Activated CD4-positive, alpha-beta T cell treated with anti-CD3 and anti-CD28 coated beads for 36 hours (primary cell): ENCODE measurements at regions of chr3 and their contacts with region 1.

Region 1: GRCh38 chr3:122514123-122515019 is at the start of gene KPNA1:
- DNase-seq: peak; percentile 93
- ATAC-seq: peak; percentile 93
- H3K4me3 Mint-ChIP-seq: peak within 1 kb of the TSS; percentile 77
- H3K27ac Mint-ChIP-seq: peak within 1 kb of the TSS; percentile 84
- H3K4me1 Mint-ChIP-seq: peaks cover 39% of the 10 kb centered on the region
- H3K27me3 Mint-ChIP-seq: no peaks in the 10 kb centered on the region
- total RNA-seq, gene KPNA1: 37.5 to 42.6 TPM

Region 2: GRCh38 chr3:122415720-122416654 is 98.4 kb before region 1 on chr3 and contains the start of gene WDR5B:
- CTCF ChIA-PET with region 1: no interaction called
- POLR2A ChIA-PET with region 1: interaction called, 6 read pairs
- intact Hi-C with region 1: loop called (anchors 1 to 5 kb)
- DNase-seq: peak; percentile 99
- ATAC-seq: peak; percentile 91
- H3K4me3 Mint-ChIP-seq: peak within 1 kb of the TSS; percentile 96
- H3K27ac Mint-ChIP-seq: peak within 1 kb of the TSS; percentile 96
- H3K4me1 Mint-ChIP-seq: peaks cover 46% of the 10 kb centered on the region
- H3K27me3 Mint-ChIP-seq: no peaks in the 10 kb centered on the region
- total RNA-seq, gene WDR5B: 2.6 to 2.8 TPM

Region 3: GRCh38 chr3:122497425-122497824 is 16.9 kb before region 1 on chr3:
- CTCF ChIA-PET with region 1: interaction called, 3 read pairs
- POLR2A ChIA-PET with region 1: no interaction called
- intact Hi-C with region 1: loop called (anchors 1 to 2 kb)
- DNase-seq: peak; percentile 58
- ATAC-seq: peak; percentile 98
- H3K4me3 Mint-ChIP-seq: no peak overlapping the region
- H3K27ac Mint-ChIP-seq: no peak overlapping the region
- H3K4me1 Mint-ChIP-seq: peaks cover 50% of the 10 kb centered on the region
- H3K27me3 Mint-ChIP-seq: peaks cover 2% of the 10 kb centered on the region

Region 4: DNA sequence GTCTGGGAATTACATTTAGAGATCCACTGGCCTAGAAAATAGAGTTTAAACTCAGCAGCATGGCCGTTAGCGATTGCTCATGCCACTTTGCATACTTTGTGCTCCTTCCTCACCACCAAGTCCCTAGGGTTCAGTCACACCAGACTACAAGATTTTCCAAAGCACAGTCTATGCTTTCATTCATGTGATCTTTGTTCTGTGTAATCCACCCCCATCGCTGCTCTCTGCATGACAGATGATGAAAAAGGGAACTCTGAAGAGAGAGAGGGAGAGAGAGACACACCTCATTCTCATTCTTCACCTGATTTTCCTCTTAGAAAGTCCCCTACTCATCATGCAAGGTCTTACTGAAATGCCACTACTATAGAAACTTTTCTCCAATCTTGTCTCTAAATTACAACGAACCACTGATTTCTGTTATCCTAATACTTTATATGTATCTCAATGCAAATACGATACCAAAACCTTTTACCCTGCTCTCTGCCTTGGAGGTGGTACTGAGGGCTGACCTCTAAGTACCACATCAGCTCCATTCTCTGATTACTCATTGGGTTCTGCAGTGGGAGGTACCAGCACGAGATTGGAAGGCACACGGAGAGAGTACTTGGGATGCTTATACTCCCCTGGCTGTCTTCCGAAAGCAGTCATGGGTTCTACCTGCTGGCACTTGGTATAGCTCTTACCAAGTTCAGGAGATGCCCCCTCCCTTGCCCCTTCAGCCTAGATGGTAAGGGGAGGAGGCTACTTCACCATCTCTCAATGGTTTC is 62.0 kb after region 1 on chr3:
- CTCF ChIA-PET with region 1: no interaction called
- POLR2A ChIA-PET with region 1: no interaction called
- intact Hi-C with region 1: loop called in 1 of 2 experiments (anchors 1 kb)
- DNase-seq: peak; percentile 78
- ATAC-seq: peak; percentile 90
- H3K4me3 Mint-ChIP-seq: peak overlapping the region; percentile 24
- H3K27ac Mint-ChIP-seq: peak overlapping the region; percentile 87
- H3K4me1 Mint-ChIP-seq: peaks cover 58% of the 10 kb centered on the region
- H3K27me3 Mint-ChIP-seq: no peaks in the 10 kb centered on the region

Region 5: GRCh38 chr3:123201566-123202427 is 687.4 kb after region 1 on chr3 and contains the start of gene SEC22A:
- CTCF ChIA-PET with region 1: no interaction called
- POLR2A ChIA-PET with region 1: no interaction called
- intact Hi-C with region 1: loop called in 1 of 2 experiments (anchors 5 kb)
- DNase-seq: peak; percentile 98
- ATAC-seq: peak; percentile 99
- H3K4me3 Mint-ChIP-seq: peak within 1 kb of the TSS; percentile 96
- H3K27ac Mint-ChIP-seq: peak within 1 kb of the TSS; percentile 97
- H3K4me1 Mint-ChIP-seq: peaks cover 28% of the 10 kb centered on the region
- H3K27me3 Mint-ChIP-seq: no peaks in the 10 kb centered on the region
- total RNA-seq, gene SEC22A: 13.2 to 16.3 TPM